ENCODE measurements at regions of chr10 and their contacts with region 1.

Region 1: GRCh38 chr10:14556285-14556956 is 218.3 kb downstream of the FAM107B start:
- DNase-seq: no peak
- ATAC-seq: peak; percentile 14
- H3K4me3 Mint-ChIP-seq: no peak overlapping the region
- H3K27ac Mint-ChIP-seq: peak overlapping the region; percentile 73
- H3K4me1 Mint-ChIP-seq: peaks cover 96% of the 10 kb centered on the region
- H3K27me3 Mint-ChIP-seq: no peaks in the 10 kb centered on the region

Region 2: DNA sequence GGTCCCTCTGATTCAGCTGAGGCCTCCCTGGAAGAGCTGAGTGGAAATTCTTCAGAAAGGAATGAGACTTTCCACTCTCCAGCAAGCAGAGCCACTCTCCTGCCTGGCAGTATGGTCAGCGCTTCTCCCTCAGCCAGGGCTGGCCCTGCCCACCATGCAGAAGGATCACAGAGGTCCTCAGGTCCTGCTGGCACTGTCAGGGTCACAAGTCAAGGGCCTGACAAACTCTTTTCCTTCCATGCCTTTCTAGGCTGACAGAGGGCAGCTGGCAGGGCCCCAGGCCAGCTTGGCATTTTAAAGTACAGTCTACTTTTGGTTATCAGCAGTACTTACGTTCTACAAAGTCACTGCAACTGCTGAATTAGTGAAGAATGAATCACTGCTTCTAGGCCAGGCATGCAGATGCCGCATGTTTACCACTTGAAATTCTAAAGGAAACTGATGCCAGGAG is 106.4 kb before region 1 on chr10:
- CTCF ChIA-PET with region 1: no interaction called
- POLR2A ChIA-PET with region 1: no interaction called
- DNase-seq: no peak
- ATAC-seq: no peak
- H3K4me3 Mint-ChIP-seq: no peak overlapping the region
- H3K27ac Mint-ChIP-seq: no peak overlapping the region
- H3K4me1 Mint-ChIP-seq: no peaks in the 10 kb centered on the region
- H3K27me3 Mint-ChIP-seq: peaks cover 5% of the 10 kb centered on the region

Region 3: DNA sequence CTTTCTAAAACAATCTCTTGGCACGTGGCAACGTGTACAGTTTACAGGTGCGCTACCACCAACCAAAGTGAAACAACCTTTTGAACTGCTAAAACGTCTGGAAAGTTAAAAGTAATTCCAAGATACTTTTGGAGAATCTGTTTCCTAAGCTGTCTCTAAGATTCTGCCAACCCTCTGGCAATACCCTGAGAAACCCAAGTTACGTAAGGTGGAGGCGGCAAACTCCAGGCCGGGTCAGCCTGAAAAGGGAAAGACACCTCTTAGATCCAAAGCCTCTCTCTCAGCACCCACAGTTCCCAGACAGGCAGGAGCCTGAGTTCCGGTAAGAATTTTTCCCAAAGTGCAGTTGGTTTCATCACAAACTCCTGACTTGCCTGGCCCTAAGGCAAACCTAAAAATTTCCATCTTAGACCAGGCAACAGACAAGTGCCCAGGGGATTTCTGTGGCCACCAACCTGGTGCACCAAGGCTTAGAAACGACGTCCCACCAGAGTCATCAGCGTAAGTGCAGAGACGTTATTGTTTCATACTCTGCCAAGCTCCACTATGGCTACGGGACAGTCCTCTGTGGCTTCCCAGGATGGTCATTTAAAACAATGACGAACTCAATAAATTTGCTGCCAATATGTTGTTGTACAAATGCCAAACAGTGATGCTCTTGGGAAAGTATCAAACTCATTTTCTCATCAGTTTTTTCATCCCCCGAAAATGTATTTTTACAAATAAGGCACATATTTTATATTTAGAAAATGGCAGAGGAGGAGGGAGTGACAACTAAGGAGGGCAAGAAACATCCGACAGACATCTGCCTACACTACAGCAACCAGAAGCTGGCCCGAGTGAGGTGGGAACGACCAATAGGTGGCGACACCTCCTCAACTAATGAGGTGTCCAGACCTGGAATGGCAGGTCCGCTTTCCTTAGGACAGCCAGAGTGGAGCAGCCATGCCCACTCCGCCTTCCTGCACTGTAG is 19.9 kb before region 1 on chr10:
- CTCF ChIA-PET with region 1: interaction called, 45 read pairs
- POLR2A ChIA-PET with region 1: interaction called, 3 read pairs
- DNase-seq: peak; percentile 56
- ATAC-seq: peak; percentile 62
- H3K4me3 Mint-ChIP-seq: no peak overlapping the region
- H3K27ac Mint-ChIP-seq: no peak overlapping the region
- H3K4me1 Mint-ChIP-seq: peaks cover 67% of the 10 kb centered on the region
- H3K27me3 Mint-ChIP-seq: no peaks in the 10 kb centered on the region

Region 4: GRCh38 chr10:14571866-14572507 is 15.6 kb after region 1 on chr10:
- CTCF ChIA-PET with region 1: interaction called, 39 read pairs
- POLR2A ChIA-PET with region 1: interaction called, 13 read pairs
- DNase-seq: peak; percentile 77
- ATAC-seq: peak; percentile 71
- H3K4me3 Mint-ChIP-seq: peak overlapping the region; percentile 87
- H3K27ac Mint-ChIP-seq: peak overlapping the region; percentile 96
- H3K4me1 Mint-ChIP-seq: peaks cover 87% of the 10 kb centered on the region
- H3K27me3 Mint-ChIP-seq: no peaks in the 10 kb centered on the region

Region 5: DNA sequence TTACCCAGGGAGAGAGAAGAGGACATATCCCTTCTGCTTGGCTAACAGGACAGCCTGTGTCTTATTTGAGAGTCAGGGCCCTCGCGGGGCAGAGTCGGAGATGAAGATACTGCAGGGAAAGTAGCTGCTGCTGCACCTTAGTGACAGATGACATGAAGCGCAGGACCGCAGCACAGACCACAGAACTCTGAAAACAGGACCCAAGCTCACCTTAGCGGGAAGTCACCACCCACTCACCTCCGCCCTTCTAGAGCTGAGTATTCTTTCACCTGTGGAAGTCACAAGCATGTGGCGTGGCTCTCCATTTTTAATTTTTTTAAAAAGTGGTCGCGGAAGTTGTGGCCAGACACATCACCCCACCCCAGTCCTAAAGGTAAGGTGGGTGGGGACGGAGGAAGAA is 26.8 kb after region 1 on chr10:
- CTCF ChIA-PET with region 1: interaction called, 25 read pairs
- POLR2A ChIA-PET with region 1: no interaction called
- DNase-seq: peak; percentile 90
- ATAC-seq: peak; percentile 71
- H3K4me3 Mint-ChIP-seq: peak overlapping the region; percentile 53
- H3K27ac Mint-ChIP-seq: peak overlapping the region; percentile 85
- H3K4me1 Mint-ChIP-seq: peaks cover 85% of the 10 kb centered on the region
- H3K27me3 Mint-ChIP-seq: no peaks in the 10 kb centered on the region

Region 6: DNA sequence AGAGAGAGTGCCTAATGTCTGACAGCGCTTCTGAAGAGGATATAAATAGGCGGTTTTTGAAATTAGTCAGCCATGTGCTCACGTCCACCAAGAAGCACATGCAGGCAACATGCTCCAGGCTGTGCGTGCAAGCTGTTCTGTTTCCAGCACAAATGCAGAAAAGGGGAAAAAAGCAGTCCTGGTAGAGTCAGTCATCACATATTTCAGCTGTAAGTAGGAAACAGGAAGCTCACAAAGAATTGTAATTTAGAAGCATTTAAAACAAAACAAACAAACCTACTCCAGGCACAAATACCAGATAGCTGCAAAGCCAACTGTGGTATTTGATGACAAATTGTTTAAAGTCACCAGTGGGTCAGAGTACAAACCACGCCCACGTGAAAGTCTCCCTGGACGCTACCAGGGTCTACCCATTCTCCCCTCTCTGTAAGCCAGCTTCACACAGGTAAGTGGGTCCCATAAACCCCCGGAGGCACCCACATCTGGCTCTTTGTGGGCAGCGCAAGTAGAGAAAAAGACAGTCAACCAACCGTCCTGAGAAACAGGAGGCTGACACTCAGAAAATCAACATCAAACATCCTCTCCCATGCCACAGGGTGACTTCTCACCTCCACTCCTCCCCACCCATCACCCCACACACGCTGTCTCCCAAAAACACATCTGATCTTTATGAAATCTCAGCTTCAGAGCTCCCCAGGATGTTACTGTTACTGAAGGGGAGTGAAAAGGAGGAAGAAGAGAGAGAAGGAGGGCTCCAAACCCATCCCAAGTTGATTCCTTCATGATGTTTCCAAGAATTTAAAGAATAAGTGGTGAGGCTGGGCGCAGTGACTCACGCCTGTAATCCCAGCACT is 31.9 kb after region 1 on chr10:
- CTCF ChIA-PET with region 1: interaction called, 25 read pairs
- POLR2A ChIA-PET with region 1: interaction called, 3 read pairs
- DNase-seq: peak; percentile 56
- ATAC-seq: peak; percentile 38
- H3K4me3 Mint-ChIP-seq: peak overlapping the region; percentile 60
- H3K27ac Mint-ChIP-seq: peak overlapping the region; percentile 94
- H3K4me1 Mint-ChIP-seq: peaks cover 89% of the 10 kb centered on the region
- H3K27me3 Mint-ChIP-seq: no peaks in the 10 kb centered on the region

Region 7: DNA sequence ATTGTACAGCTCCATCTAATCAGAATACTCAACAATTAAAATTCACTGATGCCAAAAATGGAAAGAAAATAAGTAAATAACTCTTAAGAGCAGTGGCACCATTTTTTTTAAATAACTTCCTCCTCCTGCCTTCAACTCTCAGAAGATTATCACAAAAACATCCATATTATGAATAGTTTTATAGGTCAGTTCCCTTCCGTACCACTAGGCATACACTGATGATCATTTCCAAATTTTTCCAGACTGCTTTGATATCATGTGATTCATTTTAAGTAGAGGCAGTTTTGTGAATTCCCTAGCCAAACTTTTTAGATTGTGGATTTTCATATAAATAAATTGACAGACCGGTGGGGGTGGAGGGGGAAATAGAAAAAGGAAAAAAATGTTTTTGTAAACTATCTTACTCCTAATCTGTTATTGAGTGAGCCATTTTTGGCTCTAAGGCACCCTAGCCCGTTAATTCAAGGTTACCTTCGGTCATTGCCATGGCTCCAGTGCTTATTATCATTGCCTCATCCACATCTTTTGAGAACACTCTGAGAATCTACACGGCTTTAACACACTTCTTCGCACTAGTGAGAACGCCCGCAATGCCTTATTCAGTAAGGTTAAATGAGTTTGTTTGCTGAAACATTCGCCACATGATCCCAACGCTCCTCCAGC is 217.3 kb after region 1 on chr10:
- CTCF ChIA-PET with region 1: no interaction called
- POLR2A ChIA-PET with region 1: no interaction called
- DNase-seq: no peak
- ATAC-seq: no peak
- H3K4me3 Mint-ChIP-seq: no peak overlapping the region
- H3K27ac Mint-ChIP-seq: no peak overlapping the region
- H3K4me1 Mint-ChIP-seq: no peaks in the 10 kb centered on the region
- H3K27me3 Mint-ChIP-seq: peaks cover 5% of the 10 kb centered on the region

Region 8: DNA sequence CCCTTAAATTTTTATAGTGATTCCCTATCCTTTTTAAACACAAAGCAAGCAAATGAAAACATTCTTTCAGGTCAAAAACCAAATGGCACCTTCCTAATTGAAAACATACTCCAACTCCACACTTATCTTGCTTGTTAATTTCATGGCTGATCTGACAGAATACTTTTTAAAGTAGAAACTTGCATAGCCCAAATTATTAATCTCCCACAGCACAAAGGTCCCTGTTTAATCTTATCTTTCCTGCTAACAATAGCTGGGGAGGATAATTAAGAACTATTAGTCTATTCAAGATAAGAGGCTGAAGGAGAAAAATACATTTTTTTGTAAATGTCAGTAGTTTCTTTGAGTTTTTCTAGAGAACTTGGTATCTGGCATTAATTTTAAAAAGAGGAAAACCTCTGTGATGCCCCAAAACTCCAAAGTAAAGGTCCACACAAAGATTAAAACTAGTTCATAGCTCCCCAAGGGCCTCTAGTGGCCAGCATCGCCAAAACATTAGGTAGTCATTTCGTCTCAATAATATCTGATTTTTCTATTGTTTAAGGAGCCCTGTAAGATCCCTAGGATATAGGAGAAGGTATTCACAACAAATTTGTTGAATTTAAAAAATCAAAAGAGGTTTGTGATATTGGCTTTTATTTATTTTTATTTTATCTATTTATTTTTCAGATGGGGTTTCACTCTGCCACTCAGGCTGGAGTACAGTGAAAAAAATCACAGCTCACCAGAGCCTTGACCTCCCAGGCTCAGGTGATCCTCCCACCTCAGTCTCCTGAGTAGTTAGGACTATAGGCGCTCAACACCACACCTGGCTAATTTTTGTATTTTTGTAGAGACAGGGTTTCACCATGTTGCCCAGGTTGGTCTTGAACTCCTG is 266.7 kb after region 1 on chr10:
- CTCF ChIA-PET with region 1: interaction called, 16 read pairs
- POLR2A ChIA-PET with region 1: no interaction called
- DNase-seq: peak; percentile 61
- ATAC-seq: no peak
- H3K4me3 Mint-ChIP-seq: no peak overlapping the region
- H3K27ac Mint-ChIP-seq: no peak overlapping the region
- H3K4me1 Mint-ChIP-seq: peaks cover 8% of the 10 kb centered on the region
- H3K27me3 Mint-ChIP-seq: peaks cover 13% of the 10 kb centered on the region

Measured in activated CD8-positive, alpha-beta T cell treated with anti-CD3 and anti-CD28 coated beads, Interleukin-2, amount 10 ng/mL, durations not matched to agents 7 days and 5 days (primary cell).